Activated CD8-positive, alpha-beta memory T cell treated with anti-CD3 and anti-CD28 coated beads, Interleukin-2, amount 10 ng/mL, durations not matched to agents 7 days and 5 days (primary cell): ENCODE measurements at regions of chr11 and their contacts with region 1.

Region 1: GRCh38 chr11:61733120-61733978 is 19.1 kb upstream of the MYRF start:
- DNase-seq: peak; percentile 88
- ATAC-seq: peak; percentile 96
- H3K4me3 Mint-ChIP-seq: no peak overlapping the region
- H3K27ac Mint-ChIP-seq: no peak overlapping the region
- H3K4me1 Mint-ChIP-seq: peaks cover 9% of the 10 kb centered on the region
- H3K27me3 Mint-ChIP-seq: no peaks in the 10 kb centered on the region

Region 2: GRCh38 chr11:61639816-61640443 is 93.4 kb before region 1 on chr11:
- CTCF ChIA-PET with region 1: interaction called, 12 read pairs
- DNase-seq: no peak
- ATAC-seq: no peak
- H3K4me3 Mint-ChIP-seq: no peak overlapping the region
- H3K27ac Mint-ChIP-seq: no peak overlapping the region
- H3K4me1 Mint-ChIP-seq: no peaks in the 10 kb centered on the region
- H3K27me3 Mint-ChIP-seq: peaks cover 3% of the 10 kb centered on the region

Region 3: DNA sequence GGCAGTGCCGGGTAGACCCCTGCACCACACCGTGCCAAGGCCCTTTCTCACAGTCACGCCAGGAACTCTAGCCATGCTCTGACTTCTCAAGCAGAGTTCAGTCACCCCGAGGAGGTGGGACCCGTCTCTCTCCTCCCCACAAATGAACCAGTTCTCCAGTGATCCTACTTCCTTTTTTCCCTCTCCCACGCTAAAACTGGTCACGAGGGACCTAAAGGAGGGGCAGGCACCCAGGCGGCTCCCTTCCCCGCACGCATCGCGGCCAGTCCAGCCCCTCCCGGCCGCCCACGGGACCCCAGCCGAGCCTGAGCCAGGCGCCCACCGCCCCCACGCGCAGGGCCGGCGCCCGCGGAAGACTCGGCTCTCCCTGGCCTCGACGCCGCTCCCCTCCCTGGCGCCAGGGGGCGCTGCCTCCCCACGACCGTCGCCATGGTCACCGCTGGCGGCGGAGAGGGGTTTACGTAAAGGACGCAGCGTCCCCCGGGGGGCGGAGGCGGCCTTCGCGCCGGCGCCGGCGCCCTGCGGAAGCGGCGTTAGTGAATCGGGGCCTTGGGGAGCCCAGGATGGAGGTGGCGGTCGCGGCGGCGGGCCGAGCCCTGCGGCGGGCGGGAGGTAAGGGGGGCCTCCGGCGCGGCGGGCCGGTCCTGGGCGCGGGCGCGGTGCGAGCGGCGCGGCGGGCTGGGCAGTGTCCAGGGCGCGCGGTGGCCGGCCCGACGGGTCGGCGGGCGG is 53.3 kb before region 1 on chr11 and contains the start of gene DAGLA:
- CTCF ChIA-PET with region 1: interaction called, 54 read pairs
- DNase-seq: peak; percentile 72
- ATAC-seq: peak; percentile 79
- H3K4me3 Mint-ChIP-seq: peak within 1 kb of the TSS; percentile 20
- H3K27ac Mint-ChIP-seq: no peak within 1 kb of the TSS
- H3K4me1 Mint-ChIP-seq: peaks cover 3% of the 10 kb centered on the region
- H3K27me3 Mint-ChIP-seq: peaks cover 34% of the 10 kb centered on the region
- total RNA-seq, gene DAGLA: not detected

Region 4: DNA sequence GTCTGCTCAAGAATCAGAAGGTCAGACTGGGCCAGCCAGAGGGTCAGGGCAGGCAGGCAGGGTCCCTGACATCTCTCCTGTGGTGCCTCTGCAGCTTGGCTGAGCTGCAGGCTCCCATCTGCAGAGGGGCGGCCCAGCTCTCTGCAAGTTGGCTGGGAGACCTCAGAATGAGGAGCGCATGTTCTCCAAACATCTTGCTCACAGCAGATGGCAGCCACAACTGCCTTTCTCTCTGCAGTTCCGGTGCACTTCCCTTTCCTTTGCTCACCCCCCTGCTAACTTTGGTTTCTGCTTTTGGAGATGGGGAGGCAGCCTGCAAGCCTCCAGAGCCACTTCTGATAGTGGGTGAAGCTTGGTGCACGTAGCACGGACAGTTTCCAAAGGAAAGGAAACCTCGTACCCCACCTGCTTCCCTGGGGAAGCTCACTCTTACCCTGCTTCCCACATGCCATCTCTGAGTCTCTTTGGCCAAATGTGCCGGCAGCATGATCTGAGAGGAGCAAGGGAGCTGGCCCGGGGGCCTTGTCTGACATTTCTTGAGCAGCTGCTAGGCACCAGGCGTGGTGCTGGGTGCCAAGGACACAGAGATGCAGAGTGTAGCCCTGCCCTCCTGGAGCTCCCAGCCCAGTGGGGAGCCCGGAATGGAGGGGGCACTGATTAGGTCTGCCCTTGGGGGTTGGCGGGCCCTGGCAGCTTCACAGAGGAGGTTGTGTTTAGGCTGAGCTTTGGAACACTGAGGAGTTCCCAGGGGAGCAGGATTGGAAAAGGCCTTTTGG is 35.0 kb before region 1 on chr11:
- CTCF ChIA-PET with region 1: interaction called, 18 read pairs
- DNase-seq: no peak
- ATAC-seq: no peak
- H3K4me3 Mint-ChIP-seq: no peak overlapping the region
- H3K27ac Mint-ChIP-seq: no peak overlapping the region
- H3K4me1 Mint-ChIP-seq: peaks cover 43% of the 10 kb centered on the region
- H3K27me3 Mint-ChIP-seq: peaks cover 10% of the 10 kb centered on the region

Region 5: DNA sequence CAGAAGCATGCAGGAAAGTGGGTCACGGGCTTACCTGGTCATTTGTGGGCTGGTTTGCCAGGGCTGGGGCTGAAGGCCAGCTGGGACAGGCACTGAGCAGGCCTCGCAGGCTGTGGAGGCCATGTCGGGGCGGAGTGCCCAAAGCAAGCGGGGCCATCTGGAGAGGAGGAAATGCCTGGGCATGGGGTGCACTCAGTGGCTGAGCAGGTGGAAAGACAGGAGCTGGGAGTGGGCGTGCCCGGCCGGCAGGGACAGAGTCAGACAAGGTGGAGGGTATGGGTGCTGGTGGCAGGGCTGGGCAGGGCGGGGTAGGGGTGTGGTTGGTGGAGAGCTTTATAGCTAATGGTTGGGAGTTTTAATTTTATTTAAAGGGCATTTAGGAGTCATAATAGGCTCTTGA is 25.8 kb before region 1 on chr11:
- CTCF ChIA-PET with region 1: interaction called, 16 read pairs
- DNase-seq: no peak
- ATAC-seq: no peak
- H3K4me3 Mint-ChIP-seq: no peak overlapping the region
- H3K27ac Mint-ChIP-seq: no peak overlapping the region
- H3K4me1 Mint-ChIP-seq: peaks cover 12% of the 10 kb centered on the region
- H3K27me3 Mint-ChIP-seq: peaks cover 16% of the 10 kb centered on the region

Region 6: GRCh38 chr11:61718621-61719302 is 14.6 kb before region 1 on chr11:
- CTCF ChIA-PET with region 1: interaction called, 11 read pairs
- DNase-seq: no peak
- ATAC-seq: no peak
- H3K4me3 Mint-ChIP-seq: no peak overlapping the region
- H3K27ac Mint-ChIP-seq: no peak overlapping the region
- H3K4me1 Mint-ChIP-seq: no peaks in the 10 kb centered on the region
- H3K27me3 Mint-ChIP-seq: peaks cover 17% of the 10 kb centered on the region

Region 7: DNA sequence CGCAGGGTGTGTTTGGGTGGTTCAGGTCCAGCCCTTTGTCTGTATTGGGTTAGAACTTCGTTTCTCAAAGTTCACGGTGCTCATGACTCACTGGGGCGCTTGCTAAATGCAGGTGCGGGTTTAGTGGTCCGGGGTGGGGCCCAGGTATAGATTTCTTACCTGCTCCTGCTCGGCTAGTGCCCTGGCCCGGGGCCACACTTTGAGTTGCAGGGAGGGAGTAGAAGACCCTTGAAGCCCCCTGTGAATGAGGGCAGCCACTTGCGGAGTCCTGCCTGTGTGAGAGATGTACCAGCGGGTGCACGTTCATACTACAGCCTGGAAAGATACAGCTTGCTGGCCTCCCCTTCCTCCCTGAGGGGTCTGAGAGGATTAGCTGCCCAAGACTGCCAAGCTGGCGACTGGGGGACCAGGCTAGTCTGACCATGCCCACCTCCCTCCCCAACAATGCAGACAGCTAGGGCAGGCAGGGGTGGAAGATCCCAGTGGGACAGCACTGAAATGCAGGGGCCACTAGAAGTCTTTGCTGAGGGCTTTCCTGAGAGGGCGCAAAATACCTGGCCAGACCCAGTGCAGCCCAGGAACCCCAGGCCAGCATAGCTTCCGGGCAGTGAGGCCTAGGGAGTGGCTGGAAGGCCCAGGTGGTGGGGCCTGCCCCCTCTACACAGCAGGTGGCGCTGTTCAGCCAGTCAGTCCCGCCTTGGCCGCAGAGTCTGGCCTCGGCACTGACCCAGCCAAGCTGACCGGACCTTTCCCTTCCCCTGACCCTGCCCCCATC is 14.0 kb after region 1 on chr11:
- CTCF ChIA-PET with region 1: interaction called, 33 read pairs
- DNase-seq: peak; percentile 65
- ATAC-seq: peak; percentile 59
- H3K4me3 Mint-ChIP-seq: no peak overlapping the region
- H3K27ac Mint-ChIP-seq: no peak overlapping the region
- H3K4me1 Mint-ChIP-seq: peaks cover 3% of the 10 kb centered on the region
- H3K27me3 Mint-ChIP-seq: peaks cover 18% of the 10 kb centered on the region

Region 8: GRCh38 chr11:61816736-61817455 is 83.5 kb after region 1 on chr11 and contains the start of gene FADS1:
- CTCF ChIA-PET with region 1: no interaction called
- DNase-seq: peak; percentile 88
- ATAC-seq: peak; percentile 67
- H3K4me3 Mint-ChIP-seq: peak within 1 kb of the TSS; percentile 92
- H3K27ac Mint-ChIP-seq: peak within 1 kb of the TSS; percentile 91
- H3K4me1 Mint-ChIP-seq: peaks cover 11% of the 10 kb centered on the region
- H3K27me3 Mint-ChIP-seq: peaks cover 15% of the 10 kb centered on the region
- total RNA-seq, gene FADS1: 33.8 to 35.4 TPM

Region 9: GRCh38 chr11:61874458-61874809 is 141.1 kb after region 1 on chr11:
- CTCF ChIA-PET with region 1: no interaction called
- DNase-seq: no peak
- ATAC-seq: no peak
- H3K4me3 Mint-ChIP-seq: no peak overlapping the region
- H3K27ac Mint-ChIP-seq: no peak overlapping the region
- H3K4me1 Mint-ChIP-seq: peaks cover 5% of the 10 kb centered on the region
- H3K27me3 Mint-ChIP-seq: peaks cover 4% of the 10 kb centered on the region